H1 (cell line): ENCODE measurements at regions of chr16 and their contacts with region 1.

Region 1: GRCh38 chr16:22898874-22899348 is 84.9 kb downstream of the HS3ST2 start:
- DNase-seq: peak; percentile 68 to 93
- H3K4me3 ChIP-seq: no peak overlapping the region
- H3K27ac ChIP-seq: no peak overlapping the region
- H3K4me1 ChIP-seq: peaks cover 0 to 2% (median under 1%) of the 10 kb centered on the region in 4 experiments; a peak in 5 of 7 replicates
- H3K27me3 ChIP-seq: no peaks in the 10 kb centered on the region
- CTCF ChIP-seq: peak; percentile 88 to 96 (median 95)
- EP300 ChIP-seq: peak in 1 of 2 experiments; percentile 7; a peak in 1 of 3 replicates
- POLR2A ChIP-seq: no peak
- RAD21 ChIP-seq: peak; percentile 98 to 99

Region 2: GRCh38 chr16:22829997-22830396 is 68.9 kb before region 1 on chr16:
- CTCF ChIA-PET with region 1: no interaction called
- POLR2A ChIA-PET with region 1: no interaction called
- DNase-seq: no peak
- H3K4me3 ChIP-seq: no peak overlapping the region
- H3K27ac ChIP-seq: no peak overlapping the region
- H3K4me1 ChIP-seq: no peaks in the 10 kb centered on the region
- H3K27me3 ChIP-seq: no peaks in the 10 kb centered on the region
- CTCF ChIP-seq: no peak
- EP300 ChIP-seq: no peak
- POLR2A ChIP-seq: no peak
- RAD21 ChIP-seq: no peak

Region 3: GRCh38 chr16:22888791-22889190 is 10.1 kb before region 1 on chr16:
- CTCF ChIA-PET with region 1: interaction called, 42 read pairs
- POLR2A ChIA-PET with region 1: no interaction called
- DNase-seq: no peak
- H3K4me3 ChIP-seq: no peak overlapping the region
- H3K27ac ChIP-seq: no peak overlapping the region
- H3K4me1 ChIP-seq: peaks cover 0 to under 1% (median 0%) of the 10 kb centered on the region in 4 experiments; a peak in 3 of 7 replicates
- H3K27me3 ChIP-seq: no peaks in the 10 kb centered on the region
- CTCF ChIP-seq: no peak
- EP300 ChIP-seq: no peak
- POLR2A ChIP-seq: no peak
- RAD21 ChIP-seq: no peak

Region 4: GRCh38 chr16:22933173-22933572 is 34.3 kb after region 1 on chr16:
- CTCF ChIA-PET with region 1: interaction called, 16 read pairs
- POLR2A ChIA-PET with region 1: no interaction called
- DNase-seq: no peak
- H3K4me3 ChIP-seq: no peak overlapping the region
- H3K27ac ChIP-seq: no peak overlapping the region
- H3K4me1 ChIP-seq: peaks cover 3 to 13% (median 5%) of the 10 kb centered on the region in 4 experiments; a peak in 5 of 7 replicates
- H3K27me3 ChIP-seq: no peaks in the 10 kb centered on the region; a peak in 1 of 7 replicates
- CTCF ChIP-seq: no peak
- EP300 ChIP-seq: no peak
- POLR2A ChIP-seq: no peak
- RAD21 ChIP-seq: no peak

Region 5: DNA sequence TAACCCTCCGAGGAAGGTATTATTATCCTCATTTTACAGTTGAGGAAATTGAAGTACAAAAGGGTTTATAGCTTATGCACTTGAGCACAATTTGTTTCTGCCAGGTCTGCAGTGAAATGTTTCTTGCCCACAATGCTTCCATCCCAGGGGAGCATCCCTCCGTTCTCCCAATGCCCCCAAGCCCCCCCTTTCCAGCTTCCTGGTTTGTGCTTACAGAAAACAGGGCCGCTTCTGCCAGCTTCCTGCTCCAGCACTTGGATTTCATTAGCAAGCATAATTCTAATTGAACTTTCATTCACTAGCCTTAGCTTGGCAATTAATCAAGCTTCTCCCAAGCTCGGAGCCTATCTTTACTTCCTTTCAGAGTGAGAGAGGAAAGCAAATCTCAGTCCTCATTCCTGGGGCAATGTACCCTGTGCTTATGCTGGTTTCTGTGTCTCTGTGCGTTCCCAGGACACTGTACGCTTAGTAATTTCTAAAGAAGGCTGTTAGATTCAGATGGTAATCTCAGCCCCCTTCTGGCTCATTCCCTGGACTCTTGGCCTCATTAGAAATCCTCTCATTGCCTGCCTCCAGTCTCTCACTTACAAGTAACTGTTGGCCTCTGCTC is 56.7 kb after region 1 on chr16:
- CTCF ChIA-PET with region 1: interaction called, 110 read pairs
- POLR2A ChIA-PET with region 1: no interaction called
- DNase-seq: no peak
- H3K4me3 ChIP-seq: no peak overlapping the region
- H3K27ac ChIP-seq: no peak overlapping the region
- H3K4me1 ChIP-seq: peaks cover 0 to 3% (median 0%) of the 10 kb centered on the region in 4 experiments; a peak in 1 of 7 replicates
- H3K27me3 ChIP-seq: no peaks in the 10 kb centered on the region
- CTCF ChIP-seq: no peak
- EP300 ChIP-seq: no peak
- POLR2A ChIP-seq: no peak
- RAD21 ChIP-seq: no peak

Region 6: DNA sequence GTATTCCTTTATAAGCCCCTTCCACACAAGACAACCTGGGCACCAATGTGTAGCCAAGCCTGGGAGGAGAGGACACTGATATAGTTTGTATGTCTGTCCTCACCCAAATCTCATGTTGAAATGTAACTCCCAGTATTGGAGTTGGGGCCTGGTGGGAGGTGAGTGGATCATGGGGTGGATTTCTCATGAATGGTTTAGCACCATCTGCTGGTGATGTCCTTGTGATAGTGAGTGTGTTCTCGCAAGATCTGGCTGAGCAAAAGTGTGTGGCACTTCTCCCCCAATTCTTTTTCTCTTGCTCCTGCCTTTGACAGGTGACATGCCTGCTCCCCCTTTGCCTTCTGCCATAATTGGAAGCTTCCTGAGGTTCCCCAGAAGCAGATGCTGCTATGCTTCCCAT is 114.6 kb after region 1 on chr16:
- CTCF ChIA-PET with region 1: interaction called, 48 read pairs
- POLR2A ChIA-PET with region 1: no interaction called
- DNase-seq: peak in 1 of 2 experiments; percentile 46
- H3K4me3 ChIP-seq: no peak overlapping the region
- H3K27ac ChIP-seq: no peak overlapping the region
- H3K4me1 ChIP-seq: no peaks in the 10 kb centered on the region
- H3K27me3 ChIP-seq: no peaks in the 10 kb centered on the region
- CTCF ChIP-seq: peak; percentile 7 to 58 (median 10); a peak in 3 of 4 replicates
- EP300 ChIP-seq: no peak
- POLR2A ChIP-seq: no peak
- RAD21 ChIP-seq: peak; percentile 42 to 52; a peak in 3 of 4 replicates

Region 7: DNA sequence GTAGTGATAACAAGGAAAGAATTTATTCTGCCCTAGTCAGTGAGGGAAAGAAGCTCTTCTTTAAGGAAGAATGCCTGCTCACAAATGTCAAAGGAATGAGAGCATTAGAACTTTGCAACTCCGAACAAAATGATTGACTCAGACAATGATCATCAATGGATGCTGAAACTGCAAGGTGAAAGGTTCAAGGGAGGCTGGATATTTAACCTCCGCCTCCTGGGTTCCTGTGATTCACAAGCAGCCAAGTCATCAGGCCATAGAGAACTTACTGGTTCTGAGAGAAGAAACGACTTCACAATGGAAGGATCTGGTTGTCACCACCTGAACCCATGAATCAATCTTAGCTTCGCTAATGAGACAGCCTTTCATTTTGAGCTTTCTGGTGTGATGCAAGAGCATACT is 387.2 kb after region 1 on chr16:
- CTCF ChIA-PET with region 1: no interaction called
- POLR2A ChIA-PET with region 1: no interaction called
- DNase-seq: no peak
- H3K4me3 ChIP-seq: no peak overlapping the region
- H3K27ac ChIP-seq: no peak overlapping the region
- H3K4me1 ChIP-seq: no peaks in the 10 kb centered on the region
- H3K27me3 ChIP-seq: 0 out of 7 replicates have a peak, but pooled peaks cover 0 to 2% (median 0%) of the 10 kb centered on the region in 4 experiments
- CTCF ChIP-seq: no peak
- EP300 ChIP-seq: no peak
- POLR2A ChIP-seq: no peak
- RAD21 ChIP-seq: no peak

Region 8: GRCh38 chr16:23615805-23616204 is 716.9 kb after region 1 on chr16:
- CTCF ChIA-PET with region 1: no interaction called
- POLR2A ChIA-PET with region 1: no interaction called
- DNase-seq: no peak
- H3K4me3 ChIP-seq: no peak overlapping the region
- H3K27ac ChIP-seq: no peak overlapping the region
- H3K4me1 ChIP-seq: no peaks in the 10 kb centered on the region
- H3K27me3 ChIP-seq: no peaks in the 10 kb centered on the region
- CTCF ChIP-seq: no peak
- EP300 ChIP-seq: no peak
- POLR2A ChIP-seq: no peak
- RAD21 ChIP-seq: no peak